GM10248 (cell line): ENCODE measurements at regions of chr1 and their contacts with region 1.

Region 1: DNA sequence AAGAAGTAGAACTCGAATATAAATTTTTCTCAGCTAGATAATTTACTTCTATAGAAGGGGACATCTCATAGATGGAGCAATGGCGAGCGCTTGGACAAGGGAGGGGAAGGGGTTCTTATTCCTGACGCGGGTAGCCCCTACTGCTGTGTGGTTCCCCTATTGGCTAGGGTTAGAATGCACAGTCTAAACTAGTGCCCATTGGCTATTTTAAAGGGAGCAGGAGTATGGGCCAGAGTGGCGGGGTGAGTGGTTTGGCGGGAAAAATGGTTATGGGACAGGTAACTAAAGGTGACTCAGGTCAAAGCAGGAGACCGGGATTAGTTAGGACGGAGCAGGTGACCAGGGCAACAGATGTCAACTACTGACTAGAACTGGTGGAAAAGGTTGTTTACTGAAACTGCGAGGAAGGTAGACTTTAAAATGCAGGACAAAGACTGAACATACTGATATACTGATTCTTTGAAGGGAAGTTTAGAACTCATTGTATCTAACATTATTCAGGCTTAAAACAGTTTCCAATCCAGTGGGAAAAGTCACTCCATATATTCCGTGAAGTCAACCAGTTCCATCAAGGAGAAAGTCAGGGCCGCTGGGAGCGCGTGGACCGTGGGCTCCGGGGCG is 940 bp upstream of the ATAD3A start:
- DNase-seq: no peak
- CTCF ChIP-seq: no peak

Region 2: DNA sequence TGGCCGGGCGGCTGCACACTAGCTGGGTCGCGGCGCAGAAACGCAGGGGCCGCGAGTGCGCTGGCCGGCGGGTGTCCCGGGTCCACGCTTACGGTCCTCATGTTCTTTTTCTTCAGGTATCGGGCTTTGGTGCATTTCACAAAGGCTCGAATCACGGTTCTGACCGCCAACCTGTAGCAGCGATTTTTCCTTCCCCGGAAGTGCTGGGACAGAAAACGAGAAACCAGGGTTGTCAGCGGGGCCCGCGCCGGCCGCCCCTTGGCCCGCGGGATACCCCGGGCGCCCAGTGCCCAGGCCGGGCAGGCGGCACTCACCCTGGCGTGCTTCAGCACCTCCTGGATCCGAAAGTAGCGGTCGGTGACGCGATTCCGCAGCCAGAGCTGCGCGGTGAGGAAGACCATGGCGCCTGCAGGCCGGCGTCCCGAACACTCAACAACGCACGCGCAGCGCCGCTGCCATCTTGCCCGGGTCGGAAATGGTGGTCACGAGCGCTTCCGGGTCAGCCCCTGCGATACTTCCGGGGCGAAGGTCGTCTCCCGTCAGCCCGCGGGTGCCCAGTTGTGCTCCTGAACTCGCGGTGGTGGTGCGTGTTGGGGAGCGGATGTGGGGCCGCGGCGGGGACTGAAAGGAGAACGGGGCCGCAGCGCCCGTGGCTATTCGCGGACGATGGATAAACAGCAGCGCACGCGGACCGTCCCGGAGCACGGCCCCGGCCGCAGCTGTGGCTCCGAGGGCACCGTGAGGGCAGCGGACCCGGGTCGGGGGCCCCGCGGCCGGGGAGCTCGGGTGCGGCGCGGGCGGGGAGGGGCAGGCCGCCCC is 104.0 kb before region 1 on chr1 and contains the start of gene MRPL20:
- CTCF ChIA-PET with region 1: interaction called, 11 read pairs
- POLR2A ChIA-PET with region 1: no interaction called
- DNase-seq: peak; percentile 97
- CTCF ChIP-seq: no peak

Region 3: GRCh38 chr1:1528301-1529267 is 17.6 kb after region 1 on chr1:
- CTCF ChIA-PET with region 1: no interaction called
- POLR2A ChIA-PET with region 1: no interaction called
- DNase-seq: no peak
- CTCF ChIP-seq: no peak